Activated T-helper 1 cell treated with anti-CD3 and anti-CD28 coated beads, Interleukin-12 subunit alpha, Interleukin-12 subunit beta, Interleukin-2, Interleukin-4 antibody, amounts not matched to agents 30 ng/mL and 10 ng/mL and 1 ng/mL, durations not matched to agents 14 hours and 24 hours and 36 hours (primary cell): ENCODE measurements at regions of chr2 and their contacts with region 1.

Region 1: GRCh38 chr2:28751252-28751955 is at the start of gene PPP1CB:
- DNase-seq: peak; percentile 98
- H3K4me3 Mint-ChIP-seq: peak within 1 kb of the TSS; percentile 95
- H3K27ac Mint-ChIP-seq: peak within 1 kb of the TSS; percentile 96
- H3K4me1 Mint-ChIP-seq: peaks cover 62% of the 10 kb centered on the region
- H3K27me3 Mint-ChIP-seq: no peaks in the 10 kb centered on the region
- total RNA-seq, gene PPP1CB: 262 and 268 TPM in 2 replicates

Region 2: DNA sequence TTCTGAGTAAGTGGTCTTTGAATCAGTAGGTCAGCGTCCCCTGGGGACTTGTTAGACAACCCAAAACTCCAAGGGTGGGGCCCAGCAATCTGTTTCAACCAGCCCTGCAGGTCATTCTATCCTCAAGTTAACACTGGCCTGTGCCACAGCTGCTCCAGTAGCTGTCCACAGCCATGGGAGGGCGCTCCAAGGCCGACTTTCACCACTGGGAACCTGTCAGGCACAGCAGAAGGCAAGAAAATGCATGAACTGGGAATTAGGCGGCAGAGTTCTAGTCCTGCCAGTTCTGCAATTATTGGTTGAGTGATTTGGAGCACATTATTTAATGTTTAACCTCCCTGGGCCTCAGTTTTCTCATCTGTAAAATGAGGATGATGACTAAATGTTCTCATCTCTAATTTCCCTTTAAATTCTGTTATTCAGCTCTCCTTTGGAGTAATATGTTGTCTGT is 997.2 kb before region 1 on chr2:
- intact Hi-C with region 1: loop called (anchors 5 kb)
- DNase-seq: peak; percentile 62
- H3K4me3 Mint-ChIP-seq: no peak overlapping the region
- H3K27ac Mint-ChIP-seq: no peak overlapping the region
- H3K4me1 Mint-ChIP-seq: no peaks in the 10 kb centered on the region
- H3K27me3 Mint-ChIP-seq: peaks cover 4% of the 10 kb centered on the region

Region 3: GRCh38 chr2:27798948-27799645 is 952.3 kb before region 1 on chr2:
- intact Hi-C with region 1: no loop called
- DNase-seq: no peak
- H3K4me3 Mint-ChIP-seq: no peak overlapping the region
- H3K27ac Mint-ChIP-seq: no peak overlapping the region
- H3K4me1 Mint-ChIP-seq: peaks cover 5% of the 10 kb centered on the region
- H3K27me3 Mint-ChIP-seq: no peaks in the 10 kb centered on the region

Region 4: GRCh38 chr2:28583899-28584553 is 167.4 kb before region 1 on chr2:
- intact Hi-C with region 1: loop called (anchors 1 kb)
- DNase-seq: peak; percentile 44
- H3K4me3 Mint-ChIP-seq: peak overlapping the region; percentile 29
- H3K27ac Mint-ChIP-seq: peak overlapping the region; percentile 74
- H3K4me1 Mint-ChIP-seq: peaks cover 44% of the 10 kb centered on the region
- H3K27me3 Mint-ChIP-seq: no peaks in the 10 kb centered on the region

Region 5: DNA sequence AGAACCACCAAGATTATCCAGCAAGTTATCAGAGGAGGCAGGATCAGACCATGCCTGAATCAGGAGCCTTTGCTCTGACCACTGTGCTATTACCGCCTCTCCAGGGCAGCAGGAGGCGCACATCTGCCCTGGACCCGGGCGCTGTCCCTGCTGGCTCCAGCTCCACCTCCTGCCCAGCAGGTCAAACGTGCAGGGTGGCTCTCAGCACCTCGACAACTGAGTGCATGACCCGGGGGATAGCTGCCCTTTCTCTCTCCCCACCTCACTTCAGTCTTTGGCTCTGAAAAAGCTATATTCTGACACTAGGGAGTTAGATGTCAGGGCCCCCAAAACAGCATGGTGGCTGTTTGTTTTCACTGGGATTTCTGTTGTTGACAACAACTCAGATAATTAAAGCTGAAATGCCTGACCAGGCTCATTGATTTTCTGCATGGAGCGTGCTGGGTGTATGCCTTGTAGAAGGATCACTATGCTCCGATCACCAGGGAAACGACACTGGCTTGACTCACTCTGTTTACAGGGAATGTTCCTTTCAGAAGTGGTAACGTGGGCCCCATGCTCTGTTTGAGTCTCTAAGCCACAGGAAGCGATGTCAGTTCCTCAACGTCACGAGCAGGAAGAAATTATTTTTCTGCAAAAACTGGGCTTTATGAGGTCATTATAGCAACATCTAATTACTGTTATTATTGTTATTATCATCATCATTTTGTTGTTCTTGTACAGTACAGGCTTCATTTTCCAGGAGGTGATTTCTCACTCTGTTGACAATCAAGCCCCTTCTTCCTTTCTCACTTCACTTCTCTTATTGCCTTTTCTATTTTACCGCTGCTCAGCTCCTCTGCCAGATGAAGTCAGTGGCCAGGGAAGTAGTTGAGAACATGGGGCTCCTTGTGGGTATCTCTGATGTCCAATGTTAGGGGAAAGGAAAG is 130.0 kb before region 1 on chr2:
- intact Hi-C with region 1: loop called (anchors 1 kb)
- DNase-seq: peak; percentile 77
- H3K4me3 Mint-ChIP-seq: peak overlapping the region; percentile 67
- H3K27ac Mint-ChIP-seq: peak overlapping the region; percentile 96
- H3K4me1 Mint-ChIP-seq: peaks cover 5% of the 10 kb centered on the region
- H3K27me3 Mint-ChIP-seq: no peaks in the 10 kb centered on the region

Region 6: GRCh38 chr2:28709101-28709500 is 42.3 kb before region 1 on chr2:
- intact Hi-C with region 1: no loop called
- DNase-seq: no peak
- H3K4me3 Mint-ChIP-seq: no peak overlapping the region
- H3K27ac Mint-ChIP-seq: no peak overlapping the region
- H3K4me1 Mint-ChIP-seq: peaks cover 7% of the 10 kb centered on the region
- H3K27me3 Mint-ChIP-seq: no peaks in the 10 kb centered on the region

Region 7: DNA sequence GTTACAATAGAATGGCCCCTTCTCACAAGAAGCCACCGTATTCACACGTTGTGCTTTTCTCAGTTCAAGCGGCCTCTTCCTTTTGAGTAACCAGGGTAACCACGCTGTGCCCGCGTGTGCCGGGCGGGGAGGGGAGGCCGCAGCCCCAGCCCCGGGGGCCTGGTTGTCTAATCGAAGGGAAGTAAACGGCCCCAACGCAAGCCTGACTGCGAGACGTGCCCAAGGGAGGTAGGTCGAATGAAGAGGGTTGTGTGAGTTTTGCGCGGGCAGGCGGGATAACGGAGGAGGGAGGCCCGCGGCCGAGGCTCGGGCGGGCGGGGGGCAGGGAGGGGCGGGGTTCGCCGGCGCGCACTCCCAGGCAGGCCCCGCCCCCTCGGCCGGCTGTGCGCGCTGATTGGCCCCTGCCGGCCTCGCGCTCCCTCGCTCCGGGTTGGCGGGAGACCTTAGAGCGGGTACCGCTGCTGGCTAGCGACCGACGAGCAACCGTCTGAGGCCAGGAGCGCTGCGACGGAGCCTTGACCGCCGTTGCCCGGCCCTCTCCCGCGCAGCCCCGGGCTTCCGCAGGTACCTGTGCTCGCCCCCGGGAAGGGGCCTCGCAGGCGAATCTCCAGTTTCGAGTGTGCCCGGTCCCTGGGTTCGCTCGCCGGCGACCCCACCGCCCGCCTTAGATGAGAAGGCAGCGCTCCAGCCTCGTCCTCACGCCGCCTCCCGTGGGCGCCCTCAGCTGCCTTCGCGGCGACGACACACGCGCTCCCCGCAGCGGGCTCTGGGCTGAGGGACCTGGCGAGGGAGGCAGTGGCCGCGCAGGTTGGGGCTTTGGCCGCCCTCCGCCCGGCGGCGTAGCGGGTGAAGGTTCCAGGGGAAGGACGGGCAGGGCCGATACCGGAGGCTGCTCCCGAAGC is 59.2 kb after region 1 on chr2 and contains the start of gene SPDYA:
- intact Hi-C with region 1: loop called (anchors 1 kb)
- DNase-seq: peak; percentile 79
- H3K4me3 Mint-ChIP-seq: peak within 1 kb of the TSS; percentile 80
- H3K27ac Mint-ChIP-seq: peak within 1 kb of the TSS; percentile 40
- H3K4me1 Mint-ChIP-seq: peaks cover 12% of the 10 kb centered on the region
- H3K27me3 Mint-ChIP-seq: peaks cover 4% of the 10 kb centered on the region
- total RNA-seq, gene SPDYA: 1.1 and 1.7 TPM in 2 replicates

Region 8: DNA sequence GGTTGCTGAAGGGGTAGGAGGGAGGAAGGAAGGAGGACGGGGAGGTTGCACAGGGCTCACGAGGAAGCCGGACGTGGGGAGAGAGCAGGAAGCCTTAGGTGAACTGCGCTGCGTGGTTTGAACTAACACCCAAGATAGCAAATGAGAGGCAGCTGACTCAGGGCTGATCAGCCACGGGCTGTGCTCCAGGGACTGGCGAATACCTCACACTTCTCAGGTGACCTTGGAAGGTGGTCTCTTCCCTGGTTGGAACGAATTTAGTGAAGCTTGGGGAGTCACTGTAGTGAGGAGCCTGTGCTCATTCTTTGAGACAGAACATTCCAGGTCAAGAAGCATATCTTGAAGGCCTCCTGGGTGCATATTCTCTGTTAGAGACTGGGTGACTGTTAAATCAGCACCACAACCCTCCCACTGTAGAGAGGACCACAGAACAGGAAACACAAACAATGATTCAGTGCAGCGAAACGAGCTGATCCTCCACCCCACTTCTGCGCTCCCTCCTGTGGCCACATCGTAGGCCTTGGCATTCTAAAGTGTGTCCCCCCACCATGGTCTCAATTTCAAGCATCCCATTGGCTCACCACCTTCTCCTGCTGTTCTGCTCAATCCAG is 263.5 kb after region 1 on chr2:
- intact Hi-C with region 1: loop called (anchors 5 kb)
- DNase-seq: peak; percentile 65
- H3K4me3 Mint-ChIP-seq: peak overlapping the region; percentile 88
- H3K27ac Mint-ChIP-seq: peak overlapping the region; percentile 99
- H3K4me1 Mint-ChIP-seq: peaks cover 65% of the 10 kb centered on the region
- H3K27me3 Mint-ChIP-seq: peaks cover 2% of the 10 kb centered on the region